Activated T-helper 1 cell treated with anti-CD3 and anti-CD28 coated beads, Interleukin-12 subunit alpha, Interleukin-12 subunit beta, Interleukin-2, Interleukin-4 antibody, amounts not matched to agents 30 ng/mL and 10 ng/mL and 1 ng/mL, durations not matched to agents 14 hours and 24 hours and 36 hours (primary cell): ENCODE measurements at regions of chr4 and their contacts with region 1.

Region 1: GRCh38 chr4:145609481-145610427 is 9.4 kb upstream of the MMAA start:
- DNase-seq: peak; percentile 31
- H3K4me3 Mint-ChIP-seq: no peak overlapping the region
- H3K27ac Mint-ChIP-seq: no peak overlapping the region
- H3K4me1 Mint-ChIP-seq: peaks cover 18% of the 10 kb centered on the region
- H3K27me3 Mint-ChIP-seq: peaks cover 11% of the 10 kb centered on the region

Region 2: GRCh38 chr4:144809056-144809640 is 800.6 kb before region 1 on chr4:
- intact Hi-C with region 1: no loop called
- DNase-seq: no peak
- H3K4me3 Mint-ChIP-seq: no peak overlapping the region
- H3K27ac Mint-ChIP-seq: no peak overlapping the region
- H3K4me1 Mint-ChIP-seq: no peaks in the 10 kb centered on the region
- H3K27me3 Mint-ChIP-seq: no peaks in the 10 kb centered on the region

Region 3: GRCh38 chr4:145216535-145216934 is 393.2 kb before region 1 on chr4:
- intact Hi-C with region 1: loop called (anchors 1 kb)
- DNase-seq: no peak
- H3K4me3 Mint-ChIP-seq: no peak overlapping the region
- H3K27ac Mint-ChIP-seq: no peak overlapping the region
- H3K4me1 Mint-ChIP-seq: no peaks in the 10 kb centered on the region
- H3K27me3 Mint-ChIP-seq: peaks cover 13% of the 10 kb centered on the region

Region 4: GRCh38 chr4:145234091-145234706 is 375.6 kb before region 1 on chr4:
- intact Hi-C with region 1: loop called (anchors 1 kb)
- DNase-seq: peak; percentile 20
- H3K4me3 Mint-ChIP-seq: no peak overlapping the region
- H3K27ac Mint-ChIP-seq: no peak overlapping the region
- H3K4me1 Mint-ChIP-seq: no peaks in the 10 kb centered on the region
- H3K27me3 Mint-ChIP-seq: peaks cover 7% of the 10 kb centered on the region